ENCODE measurements at regions of chr16 and their contacts with region 1.

Region 1: DNA sequence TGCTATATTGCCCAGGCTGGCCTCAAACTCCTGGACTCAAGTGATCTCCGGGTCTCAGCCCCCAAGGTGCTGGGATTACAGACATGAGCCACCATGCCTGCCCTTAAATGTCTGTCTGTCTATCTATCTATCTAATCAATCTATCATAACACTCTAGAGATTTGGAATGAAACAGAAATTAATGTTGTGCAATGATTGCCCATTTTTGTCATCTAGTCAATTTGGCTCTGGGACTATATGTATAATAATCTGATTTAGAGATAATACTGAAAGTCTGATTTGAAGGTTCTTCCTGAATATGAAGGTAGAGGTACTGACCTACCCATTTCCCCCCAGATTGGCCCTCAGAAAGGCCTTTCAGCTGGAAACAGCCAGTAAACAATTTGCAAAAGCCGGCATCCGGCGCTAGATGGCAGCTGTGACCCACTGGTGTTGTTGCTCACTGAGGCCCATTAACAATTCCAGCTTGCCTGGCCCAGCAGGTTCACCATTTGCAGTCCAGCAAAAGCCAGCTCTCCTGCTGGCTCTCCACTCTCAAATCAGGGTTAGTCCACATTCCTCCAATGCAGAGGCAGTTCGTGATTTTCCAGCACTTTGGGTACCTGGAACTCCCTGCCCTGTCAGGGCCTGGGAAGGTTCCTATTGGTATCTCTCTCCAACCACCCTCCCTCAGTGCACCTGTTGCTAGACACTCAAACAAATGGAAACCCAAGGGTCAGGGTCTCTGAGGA is 22.9 kb upstream of the C16orf87 start:
- DNase-seq: peak; percentile 90
- ATAC-seq: peak; percentile 87

Region 2: GRCh38 chr16:46871587-46871986 is 17.7 kb after region 1 on chr16:
- intact Hi-C with region 1: no loop called
- DNase-seq: no peak
- ATAC-seq: no peak

Region 3: GRCh38 chr16:46908540-46909372 is 54.9 kb after region 1 on chr16:
- intact Hi-C with region 1: loop called (anchors 5 kb)
- DNase-seq: peak; percentile 75
- ATAC-seq: peak; percentile 70

Region 4: GRCh38 chr16:46929378-46930332 is 75.8 kb after region 1 on chr16:
- intact Hi-C with region 1: loop called (anchors 2 kb)
- DNase-seq: peak; percentile 83
- ATAC-seq: peak; percentile 89

Region 5: GRCh38 chr16:47553853-47554564 is 700.1 kb after region 1 on chr16:
- intact Hi-C with region 1: no loop called
- DNase-seq: no peak
- ATAC-seq: no peak

Measured in sciatic nerve (tissue), 2 donors.